ENCODE measurements at regions of chr12 and their contacts with region 1.

Region 1: DNA sequence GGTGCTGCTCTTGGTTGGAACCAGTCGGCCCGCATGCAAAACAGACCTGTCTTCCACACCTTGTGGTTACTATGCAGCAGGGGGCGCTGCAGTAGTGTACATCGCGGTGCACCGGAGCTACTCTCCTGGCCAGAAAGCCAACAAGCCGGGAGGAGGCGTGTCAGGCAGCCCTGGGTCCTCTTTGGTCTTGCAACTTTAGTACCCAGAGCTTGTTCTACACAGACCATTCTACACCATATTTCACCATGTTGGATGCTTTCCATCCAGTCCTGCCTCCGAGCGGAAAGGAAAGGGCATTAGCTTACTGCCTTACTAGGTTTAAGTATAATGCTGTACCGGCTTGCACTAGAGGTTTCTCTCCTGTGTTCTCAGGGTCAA is 927 bp upstream of the TMTC2 start:
- DNase-seq: peak; percentile 85 to 90 (median 87)
- H3K4me3 ChIP-seq: peak overlapping the region; percentile 61 to 85
- H3K4me3 Mint-ChIP-seq: peak overlapping the region; percentile 93 to 100 (median 97)
- H3K27ac ChIP-seq: peak overlapping the region; percentile 75
- H3K27ac Mint-ChIP-seq: peak overlapping the region; percentile 95 to 99 (median 96)
- H3K4me1 ChIP-seq: peaks cover 12% of the 10 kb centered on the region
- H3K4me1 Mint-ChIP-seq: peaks cover 7 to 28% (median 17%) of the 10 kb centered on the region in 4 donors
- H3K27me3 ChIP-seq: no peaks in the 10 kb centered on the region
- H3K27me3 Mint-ChIP-seq: peaks cover 11 to 13% of the 10 kb centered on the region in 2 donors

Region 2: GRCh38 chr12:82672811-82673495 is 12.8 kb before region 1 on chr12:
- CTCF ChIA-PET with region 1: interaction called, 38 read pairs
- POLR2A ChIA-PET with region 1: no interaction called
- intact Hi-C with region 1: no loop called
- DNase-seq: no peak
- H3K4me3 ChIP-seq: no peak overlapping the region
- H3K4me3 Mint-ChIP-seq: no peak overlapping the region
- H3K27ac ChIP-seq: no peak overlapping the region
- H3K27ac Mint-ChIP-seq: no peak overlapping the region
- H3K4me1 ChIP-seq: no peaks in the 10 kb centered on the region
- H3K4me1 Mint-ChIP-seq: no peaks in the 10 kb centered on the region
- H3K27me3 ChIP-seq: peaks cover 3% of the 10 kb centered on the region
- H3K27me3 Mint-ChIP-seq: peaks cover 0 to 12% of the 10 kb centered on the region in 2 donors

Region 3: DNA sequence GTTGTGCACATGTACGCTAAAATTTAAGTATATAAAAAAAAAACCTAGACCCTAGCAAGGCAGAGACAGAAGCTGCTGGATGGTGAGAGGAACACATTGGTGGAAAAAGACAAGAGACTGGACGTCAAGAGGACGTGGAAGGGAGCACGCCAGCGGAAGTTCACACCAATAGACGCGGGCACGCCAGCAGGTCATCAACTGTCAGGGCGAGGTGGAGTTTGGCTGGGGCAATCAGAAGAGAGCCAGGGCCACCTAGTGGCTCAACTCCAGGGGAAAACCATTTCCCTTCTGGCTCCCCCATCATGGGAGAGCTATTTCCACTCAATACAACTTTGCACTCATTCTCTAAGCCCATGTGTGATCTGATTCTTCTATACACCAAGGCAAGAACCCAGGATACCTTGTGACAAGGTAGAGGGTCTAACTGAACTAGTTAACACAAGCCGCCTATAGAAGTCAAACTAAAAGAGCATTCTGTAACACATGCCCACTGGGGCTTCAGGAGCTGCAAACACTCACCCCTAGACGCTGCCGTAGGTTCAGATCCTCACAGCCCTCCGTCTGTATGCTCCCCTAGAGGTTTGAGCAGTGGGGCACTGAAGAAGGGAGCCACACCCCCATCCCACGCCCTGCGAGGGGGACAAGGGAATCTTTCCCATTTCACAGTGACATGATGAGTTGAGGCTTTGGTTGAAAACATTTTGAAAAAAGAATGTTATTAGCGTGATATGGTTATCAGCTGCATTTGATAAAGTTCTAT is 703.6 kb after region 1 on chr12:
- CTCF ChIA-PET with region 1: no interaction called
- POLR2A ChIA-PET with region 1: no interaction called
- intact Hi-C with region 1: loop called (anchors 10 kb)
- DNase-seq: no peak
- H3K4me3 ChIP-seq: no peak overlapping the region
- H3K4me3 Mint-ChIP-seq: no peak overlapping the region
- H3K27ac ChIP-seq: no peak overlapping the region
- H3K27ac Mint-ChIP-seq: no peak overlapping the region
- H3K4me1 ChIP-seq: no peaks in the 10 kb centered on the region
- H3K4me1 Mint-ChIP-seq: no peaks in the 10 kb centered on the region
- H3K27me3 ChIP-seq: no peaks in the 10 kb centered on the region
- H3K27me3 Mint-ChIP-seq: no peaks in the 10 kb centered on the region

Region 4: DNA sequence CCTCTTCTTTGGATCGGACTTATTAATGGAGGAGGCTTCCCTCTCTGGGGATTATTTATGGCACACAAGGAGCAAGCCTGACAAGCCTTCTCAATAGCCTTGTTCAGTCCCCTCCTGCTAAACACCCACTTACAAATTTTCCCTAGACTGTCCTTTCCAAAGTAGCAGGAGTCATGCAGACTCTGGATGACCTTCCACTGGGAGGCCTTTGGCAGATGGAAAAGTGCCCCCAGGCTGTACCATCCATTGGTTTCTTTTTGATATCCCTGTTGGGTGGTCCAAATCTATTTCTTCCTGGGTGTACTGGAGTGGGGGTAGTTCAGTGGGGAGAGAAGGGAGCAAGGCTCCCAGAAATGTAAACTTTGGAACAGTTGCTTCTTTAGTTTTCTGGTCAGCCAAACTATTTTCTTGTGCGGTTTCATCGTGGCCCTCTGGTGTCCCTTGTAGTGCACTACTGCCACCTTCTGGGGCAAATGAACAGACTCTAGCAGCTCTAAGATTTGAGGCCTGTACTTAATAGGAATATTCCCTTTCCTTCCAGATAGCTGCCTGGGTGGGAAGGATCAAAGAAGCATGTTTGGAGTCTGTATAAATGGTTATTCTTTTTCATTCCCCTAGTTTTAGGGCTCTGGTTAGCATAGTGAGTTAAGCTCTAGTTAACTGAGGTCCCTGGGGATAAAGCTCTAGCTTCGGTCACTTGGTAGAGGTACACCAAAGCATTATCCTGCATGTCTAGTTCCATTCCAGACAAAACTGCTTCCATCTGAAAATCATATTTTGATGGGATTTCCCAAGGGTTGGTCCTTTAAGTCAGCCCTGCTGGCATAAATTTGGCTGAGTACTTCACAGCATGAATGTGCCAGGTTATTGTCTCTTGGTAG is 1817.4 kb after region 1 on chr12:
- CTCF ChIA-PET with region 1: interaction called, 16 read pairs
- POLR2A ChIA-PET with region 1: no interaction called
- intact Hi-C with region 1: loop called (anchors 1 kb)
- DNase-seq: peak in 1 of 5 donors; percentile 6
- H3K4me3 ChIP-seq: no peak overlapping the region
- H3K4me3 Mint-ChIP-seq: no peak overlapping the region
- H3K27ac ChIP-seq: no peak overlapping the region
- H3K27ac Mint-ChIP-seq: no peak overlapping the region
- H3K4me1 ChIP-seq: no peaks in the 10 kb centered on the region
- H3K4me1 Mint-ChIP-seq: no peaks in the 10 kb centered on the region
- H3K27me3 ChIP-seq: no peaks in the 10 kb centered on the region
- H3K27me3 Mint-ChIP-seq: no peaks in the 10 kb centered on the region